PC-3 (cell line): ENCODE measurements at regions of chr17 and their contacts with region 1.

Region 1: GRCh38 chr17:81879121-81879520 is 8.0 kb upstream of the ARHGDIA start:
- DNase-seq: no peak
- ATAC-seq: peak; percentile 49
- H3K4me3 ChIP-seq: no peak overlapping the region
- H3K27ac ChIP-seq: no peak overlapping the region
- H3K4me1 ChIP-seq: peaks cover 16% of the 10 kb centered on the region
- H3K27me3 ChIP-seq: no peaks in the 10 kb centered on the region
- CTCF ChIP-seq: no peak

Region 2: GRCh38 chr17:81725439-81725838 is 153.7 kb before region 1 on chr17:
- CTCF ChIA-PET with region 1: no interaction called
- POLR2A ChIA-PET with region 1: interaction called, 12 read pairs
- intact Hi-C with region 1: no loop called
- DNase-seq: no peak
- ATAC-seq: no peak
- H3K4me3 ChIP-seq: no peak overlapping the region
- H3K27ac ChIP-seq: no peak overlapping the region
- H3K4me1 ChIP-seq: peaks cover 38% of the 10 kb centered on the region
- H3K27me3 ChIP-seq: no peaks in the 10 kb centered on the region
- CTCF ChIP-seq: no peak

Region 3: GRCh38 chr17:81814748-81815645 is 64.1 kb before region 1 on chr17:
- CTCF ChIA-PET with region 1: no interaction called
- POLR2A ChIA-PET with region 1: no interaction called
- intact Hi-C with region 1: no loop called
- DNase-seq: no peak
- ATAC-seq: peak; percentile 36
- H3K4me3 ChIP-seq: no peak overlapping the region
- H3K27ac ChIP-seq: no peak overlapping the region
- H3K4me1 ChIP-seq: peaks cover 10% of the 10 kb centered on the region
- H3K27me3 ChIP-seq: no peaks in the 10 kb centered on the region
- CTCF ChIP-seq: no peak

Region 4: GRCh38 chr17:82188001-82188961 is 309.2 kb after region 1 on chr17:
- CTCF ChIA-PET with region 1: no interaction called
- POLR2A ChIA-PET with region 1: no interaction called
- intact Hi-C with region 1: no loop called
- DNase-seq: no peak
- ATAC-seq: no peak
- H3K4me3 ChIP-seq: no peak overlapping the region
- H3K27ac ChIP-seq: no peak overlapping the region
- H3K4me1 ChIP-seq: no peaks in the 10 kb centered on the region
- H3K27me3 ChIP-seq: no peaks in the 10 kb centered on the region
- CTCF ChIP-seq: no peak